OCI-LY7 (cell line): ENCODE measurements at regions of chr2 and their contacts with region 1.

Region 1: DNA sequence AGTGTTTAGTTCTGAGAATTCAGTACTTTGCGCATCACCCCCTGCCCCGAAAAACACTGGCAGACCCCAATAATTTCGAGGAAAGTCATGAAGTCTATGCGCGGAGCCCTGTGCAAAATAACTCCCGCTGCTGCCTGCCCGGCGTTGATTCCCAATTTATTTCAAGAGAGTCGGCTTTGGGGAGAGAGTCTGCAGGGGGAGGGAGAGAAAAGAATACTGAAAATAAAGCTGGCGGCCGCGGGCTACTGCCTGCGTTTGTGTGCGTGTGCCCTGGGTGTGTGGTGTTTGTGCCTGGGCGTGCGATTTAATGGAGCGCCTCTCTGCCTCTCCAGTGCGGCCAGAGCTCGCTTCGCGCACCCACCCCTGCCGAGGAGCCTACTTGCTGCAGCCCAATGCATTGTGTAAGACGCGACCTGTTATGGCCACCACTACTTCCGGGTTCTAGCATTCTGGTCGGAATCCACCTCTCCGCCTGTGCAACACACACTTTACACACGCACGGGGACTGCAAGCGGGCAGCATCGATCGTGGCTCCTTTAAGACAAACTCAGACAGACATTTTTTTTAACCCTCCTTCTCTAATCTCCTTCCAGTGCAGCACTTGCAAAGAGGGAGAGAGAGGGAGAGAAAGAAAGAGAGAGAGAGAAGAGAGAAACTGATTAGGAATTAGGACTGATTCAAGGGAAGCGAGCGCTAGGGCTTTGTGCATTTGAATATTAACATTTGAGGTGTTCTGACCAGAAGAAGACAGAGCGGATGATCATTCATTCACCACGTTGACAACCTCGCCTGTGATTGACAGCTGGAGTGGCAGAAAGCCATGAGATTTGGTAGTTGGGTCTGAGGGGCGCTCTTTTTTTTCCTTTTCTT is at the start of gene MEIS1:
- DNase-seq: peak; percentile 92
- H3K4me3 ChIP-seq: peak within 1 kb of the TSS; percentile 77
- H3K27ac ChIP-seq: peak within 1 kb of the TSS; percentile 60
- H3K4me1 ChIP-seq: peaks cover 25% of the 10 kb centered on the region
- CTCF ChIP-seq: no peak
- total RNA-seq, gene MEIS1: 5.4 and 14.3 TPM in 2 replicates

Region 2: DNA sequence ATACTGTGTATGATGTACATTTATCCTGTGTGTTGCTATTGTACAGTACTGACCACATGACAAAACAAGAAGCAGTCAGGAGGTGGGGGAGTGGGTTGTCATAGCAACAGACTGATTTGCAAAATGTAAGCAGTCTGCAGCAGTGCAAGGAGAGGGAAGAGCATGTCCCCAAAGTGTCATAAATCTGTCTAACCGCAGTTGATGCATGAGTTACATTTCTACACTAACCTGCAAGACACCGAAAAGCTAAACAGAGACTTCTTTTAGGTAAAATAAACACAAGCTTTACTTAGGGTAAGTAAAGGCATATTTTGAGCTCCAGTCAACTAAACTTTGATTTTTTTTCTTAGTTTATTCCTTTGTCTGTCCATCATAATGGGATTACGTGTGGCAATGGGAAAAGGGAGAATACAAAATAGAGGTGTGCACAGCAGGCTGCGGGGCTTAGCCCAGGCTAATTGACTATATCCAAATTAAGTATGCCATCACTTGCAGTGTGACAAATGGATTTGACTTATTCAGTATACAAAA is 134.5 kb after region 1 on chr2:
- CTCF ChIA-PET with region 1: no interaction called
- POLR2A ChIA-PET with region 1: no interaction called
- intact Hi-C with region 1: loop called (anchors 10 kb)
- DNase-seq: peak; percentile 39
- H3K4me3 ChIP-seq: no peak overlapping the region
- H3K27ac ChIP-seq: no peak overlapping the region
- H3K4me1 ChIP-seq: peaks cover 7% of the 10 kb centered on the region
- CTCF ChIP-seq: no peak

Region 3: GRCh38 chr2:66581339-66582103 is 146.6 kb after region 1 on chr2:
- CTCF ChIA-PET with region 1: no interaction called
- POLR2A ChIA-PET with region 1: no interaction called
- intact Hi-C with region 1: no loop called
- DNase-seq: no peak
- H3K4me3 ChIP-seq: no peak overlapping the region
- H3K27ac ChIP-seq: no peak overlapping the region
- H3K4me1 ChIP-seq: no peaks in the 10 kb centered on the region
- CTCF ChIP-seq: no peak

Region 4: DNA sequence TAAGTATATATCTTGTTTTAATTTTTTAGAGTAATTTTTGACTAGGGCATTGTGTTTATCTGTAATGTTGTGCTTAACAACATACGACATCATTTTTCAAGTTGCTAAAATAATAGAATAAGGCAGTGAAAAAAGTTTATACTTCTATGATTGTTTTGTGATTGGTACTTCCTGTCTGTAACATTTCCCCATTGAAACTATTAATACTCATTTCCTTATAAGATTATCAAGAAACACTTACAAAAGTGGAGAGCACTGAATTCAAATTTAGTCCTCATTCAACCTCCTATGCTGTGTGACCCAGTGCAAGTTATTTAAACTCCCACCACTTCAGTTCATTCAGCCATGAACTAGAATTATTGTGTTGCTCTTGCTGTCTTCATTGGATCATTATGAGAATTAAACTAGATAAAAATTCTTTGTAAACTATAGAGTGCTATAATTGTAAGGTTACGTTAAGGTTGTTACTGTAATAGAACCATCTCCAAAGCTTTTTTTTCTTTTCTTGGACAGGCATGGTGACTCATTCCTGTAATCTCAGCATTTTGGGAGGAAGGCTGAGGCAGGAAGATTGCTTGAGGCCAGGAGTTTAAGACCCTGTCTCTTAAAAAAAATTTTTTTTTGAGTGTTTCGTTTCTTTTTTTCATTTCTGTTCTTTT is 965.0 kb after region 1 on chr2:
- CTCF ChIA-PET with region 1: no interaction called
- POLR2A ChIA-PET with region 1: no interaction called
- intact Hi-C with region 1: loop called (anchors 2 kb)
- DNase-seq: no peak
- H3K4me3 ChIP-seq: no peak overlapping the region
- H3K27ac ChIP-seq: no peak overlapping the region
- H3K4me1 ChIP-seq: peaks cover 24% of the 10 kb centered on the region
- CTCF ChIP-seq: no peak

Region 5: DNA sequence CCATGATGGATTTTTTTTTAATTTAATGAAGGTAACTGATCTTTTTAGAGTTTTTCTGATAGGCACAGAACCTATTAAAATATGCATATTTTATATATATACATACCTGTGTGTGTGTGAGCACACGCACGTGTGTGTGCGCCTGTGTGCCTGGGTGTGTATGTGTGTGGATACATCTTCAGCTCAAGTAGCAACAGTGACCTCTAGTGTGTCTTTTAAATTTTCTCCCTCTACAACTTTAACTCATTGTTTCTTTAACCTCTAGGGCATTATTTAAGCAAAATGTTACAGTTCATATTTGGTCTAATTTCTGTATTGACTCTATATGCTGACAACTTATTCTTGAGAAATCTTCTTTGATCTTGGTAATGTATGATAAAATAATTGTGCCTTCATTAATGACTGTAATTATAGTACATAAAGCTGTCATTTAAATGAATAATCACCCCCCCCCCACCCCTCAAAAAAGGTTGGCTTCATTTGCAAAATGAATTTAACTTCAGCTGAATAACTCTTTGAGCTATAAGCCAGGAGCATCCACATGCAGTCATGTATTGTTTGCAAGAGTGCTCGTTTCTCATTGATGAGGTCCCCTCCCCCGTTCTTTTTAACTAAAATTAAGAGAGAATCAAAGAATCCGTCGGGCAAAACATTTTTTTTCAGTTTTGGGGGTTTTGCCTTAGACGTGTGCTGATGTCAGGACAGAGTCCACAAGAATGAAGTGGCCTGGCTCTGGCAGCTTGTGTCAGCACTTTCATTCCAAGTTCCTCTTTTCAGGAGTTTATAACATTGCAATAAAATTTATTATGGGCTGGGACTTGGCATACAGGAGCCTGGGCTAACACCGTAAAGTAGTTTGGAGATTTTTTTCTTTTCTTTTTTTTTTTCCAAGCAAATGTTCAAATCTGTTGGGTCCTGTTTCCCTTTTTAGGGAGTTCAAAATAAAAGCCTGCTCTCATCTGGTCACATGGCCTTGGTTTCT is 1042.2 kb after region 1 on chr2:
- CTCF ChIA-PET with region 1: no interaction called
- POLR2A ChIA-PET with region 1: no interaction called
- intact Hi-C with region 1: loop called (anchors 5 kb)
- DNase-seq: peak; percentile 37
- H3K4me3 ChIP-seq: no peak overlapping the region
- H3K27ac ChIP-seq: no peak overlapping the region
- H3K4me1 ChIP-seq: no peaks in the 10 kb centered on the region
- CTCF ChIP-seq: peak; percentile 76

Region 6: DNA sequence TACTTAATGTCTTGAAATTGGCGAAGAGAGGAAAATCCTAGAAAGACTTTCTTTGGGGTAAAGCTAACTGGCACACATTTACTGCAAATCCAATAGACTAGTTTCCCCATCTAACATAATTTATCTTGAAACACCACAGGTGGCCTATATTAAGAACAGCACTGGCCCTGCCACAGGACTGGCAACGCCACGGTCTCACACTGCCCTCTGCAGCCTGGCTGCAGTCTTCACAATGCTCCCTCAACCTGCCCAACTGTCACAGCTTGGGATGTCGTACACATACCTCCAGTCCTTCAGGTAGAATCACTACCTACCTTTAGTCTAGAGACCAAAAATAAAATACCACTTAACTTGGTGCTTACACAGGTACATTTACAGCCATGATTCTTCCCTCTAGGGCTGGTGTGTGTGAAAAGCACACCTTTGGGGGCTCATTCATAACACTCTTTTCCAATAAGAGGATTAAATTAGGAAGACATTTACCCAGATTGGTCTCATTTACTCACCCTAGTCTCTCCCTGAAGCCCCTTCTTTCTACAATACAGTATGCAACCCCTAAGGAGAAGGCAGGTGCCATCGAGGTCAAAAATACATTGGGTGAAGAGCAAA is 1405.7 kb after region 1 on chr2:
- CTCF ChIA-PET with region 1: no interaction called
- POLR2A ChIA-PET with region 1: no interaction called
- intact Hi-C with region 1: loop called (anchors 10 kb)
- DNase-seq: peak; percentile 65
- H3K4me3 ChIP-seq: no peak overlapping the region
- H3K27ac ChIP-seq: no peak overlapping the region
- H3K4me1 ChIP-seq: no peaks in the 10 kb centered on the region
- CTCF ChIP-seq: peak; percentile 84

Region 7: DNA sequence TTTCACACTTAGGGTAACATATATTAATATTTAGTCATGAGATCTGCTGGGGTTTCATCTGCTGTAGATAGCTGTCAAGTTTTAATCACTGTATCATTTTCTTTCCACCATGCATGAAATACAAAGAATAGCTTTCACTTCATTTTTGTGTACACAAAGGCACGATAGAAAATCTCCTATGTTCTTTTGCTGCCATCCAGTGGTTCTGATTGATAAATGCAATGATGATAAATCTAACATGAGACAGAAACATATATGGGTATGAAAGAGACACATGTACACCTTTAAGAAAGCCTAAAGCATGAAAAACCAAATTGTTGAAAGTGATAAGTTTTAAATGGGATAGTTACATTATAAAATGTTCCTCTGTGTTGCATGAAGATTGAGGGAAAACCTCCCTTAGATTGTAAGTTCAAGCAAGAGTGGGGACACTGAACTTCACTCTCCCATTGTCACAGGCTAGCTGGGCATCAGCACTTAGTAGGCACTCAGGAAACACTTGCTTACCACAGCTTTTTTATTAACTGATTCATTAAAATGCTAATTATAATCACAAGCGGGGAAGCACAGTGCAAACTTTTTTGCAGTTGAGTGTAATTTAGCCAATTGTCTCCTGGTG is 1596.7 kb after region 1 on chr2:
- CTCF ChIA-PET with region 1: no interaction called
- POLR2A ChIA-PET with region 1: no interaction called
- intact Hi-C with region 1: loop called (anchors 10 kb)
- DNase-seq: peak; percentile 70
- H3K4me3 ChIP-seq: no peak overlapping the region
- H3K27ac ChIP-seq: no peak overlapping the region
- H3K4me1 ChIP-seq: no peaks in the 10 kb centered on the region
- CTCF ChIP-seq: peak; percentile 93